HCT116 (cell line): ENCODE measurements at regions of chr4 and their contacts with region 1.

Region 1: DNA sequence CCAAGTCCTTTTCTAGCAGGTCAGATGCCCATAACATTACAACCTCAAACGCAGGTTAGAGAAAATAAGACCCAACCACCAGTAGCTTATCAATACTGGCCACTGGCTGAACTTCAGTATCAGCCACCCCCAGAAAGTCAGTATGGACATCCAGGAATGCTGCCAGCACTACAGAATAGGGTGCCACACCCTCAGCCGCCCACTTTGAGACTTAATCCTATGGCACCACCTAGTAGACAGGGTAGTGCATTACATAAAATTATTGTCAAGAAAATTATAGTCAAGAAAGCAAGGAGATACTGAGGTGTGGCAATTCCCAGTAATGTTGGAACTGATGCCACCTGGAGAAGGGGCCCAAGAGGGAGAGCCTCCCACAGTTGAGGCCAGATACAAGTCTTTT is 19.9 kb upstream of the TRIM61 start:
- DNase-seq: peak; percentile 40
- ATAC-seq: peak; percentile 91
- H3K4me3 ChIP-seq: no peak overlapping the region
- H3K27ac ChIP-seq: no peak overlapping the region
- H3K4me1 ChIP-seq: no peaks in the 10 kb centered on the region
- H3K27me3 ChIP-seq: no peaks in the 10 kb centered on the region
- CTCF ChIP-seq: peak; percentile 23 to 59 (median 59); a peak in 4 of 6 replicates
- POLR2A ChIP-seq: no peak
- RAD21 ChIP-seq: peak; percentile 81

Region 2: DNA sequence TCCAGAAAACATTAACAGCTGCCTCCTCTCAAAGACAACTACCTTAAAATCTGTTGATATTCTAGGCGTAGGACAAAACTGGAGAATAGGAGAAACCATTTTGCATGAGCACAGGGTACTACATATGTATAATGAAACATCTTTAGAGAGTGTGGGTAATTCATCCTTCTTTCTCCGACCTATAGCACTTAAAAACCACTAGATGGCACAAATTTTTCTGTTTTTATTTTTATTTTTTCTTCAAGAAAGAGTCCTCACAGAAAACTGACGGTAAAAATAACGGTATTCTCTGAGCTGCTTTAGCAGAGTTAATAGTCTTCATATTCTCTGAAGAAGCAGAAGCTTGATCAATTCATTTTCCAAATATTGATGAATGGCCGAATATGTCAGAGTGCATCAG is 228.8 kb before region 1 on chr4:
- CTCF ChIA-PET with region 1: interaction called, 4 read pairs
- POLR2A ChIA-PET with region 1: no interaction called
- RAD21 ChIA-PET with region 1: no interaction called
- intact Hi-C with region 1: loop called (anchors 1 kb)
- DNase-seq: peak; percentile 6
- ATAC-seq: peak; percentile 79
- H3K4me3 ChIP-seq: no peak overlapping the region
- H3K27ac ChIP-seq: no peak overlapping the region
- H3K4me1 ChIP-seq: no peaks in the 10 kb centered on the region
- H3K27me3 ChIP-seq: no peaks in the 10 kb centered on the region
- CTCF ChIP-seq: peak; percentile 39 to 61 (median 48); a peak in 5 of 6 replicates
- POLR2A ChIP-seq: no peak
- RAD21 ChIP-seq: peak; percentile 39

Region 3: GRCh38 chr4:164937576-164938270 is 59.6 kb before region 1 on chr4:
- CTCF ChIA-PET with region 1: no interaction called
- POLR2A ChIA-PET with region 1: no interaction called
- RAD21 ChIA-PET with region 1: no interaction called
- intact Hi-C with region 1: loop called (anchors 1 kb)
- DNase-seq: no peak
- ATAC-seq: peak; percentile 80
- H3K4me3 ChIP-seq: no peak overlapping the region
- H3K27ac ChIP-seq: no peak overlapping the region
- H3K4me1 ChIP-seq: no peaks in the 10 kb centered on the region
- H3K27me3 ChIP-seq: no peaks in the 10 kb centered on the region
- CTCF ChIP-seq: peak in 2 of 3 experiments; percentile 47 to 48; a peak in 4 of 6 replicates
- POLR2A ChIP-seq: no peak
- RAD21 ChIP-seq: no peak